HepG2 (cell line): ENCODE measurements at regions of chr2 and their contacts with region 1.

Region 1: DNA sequence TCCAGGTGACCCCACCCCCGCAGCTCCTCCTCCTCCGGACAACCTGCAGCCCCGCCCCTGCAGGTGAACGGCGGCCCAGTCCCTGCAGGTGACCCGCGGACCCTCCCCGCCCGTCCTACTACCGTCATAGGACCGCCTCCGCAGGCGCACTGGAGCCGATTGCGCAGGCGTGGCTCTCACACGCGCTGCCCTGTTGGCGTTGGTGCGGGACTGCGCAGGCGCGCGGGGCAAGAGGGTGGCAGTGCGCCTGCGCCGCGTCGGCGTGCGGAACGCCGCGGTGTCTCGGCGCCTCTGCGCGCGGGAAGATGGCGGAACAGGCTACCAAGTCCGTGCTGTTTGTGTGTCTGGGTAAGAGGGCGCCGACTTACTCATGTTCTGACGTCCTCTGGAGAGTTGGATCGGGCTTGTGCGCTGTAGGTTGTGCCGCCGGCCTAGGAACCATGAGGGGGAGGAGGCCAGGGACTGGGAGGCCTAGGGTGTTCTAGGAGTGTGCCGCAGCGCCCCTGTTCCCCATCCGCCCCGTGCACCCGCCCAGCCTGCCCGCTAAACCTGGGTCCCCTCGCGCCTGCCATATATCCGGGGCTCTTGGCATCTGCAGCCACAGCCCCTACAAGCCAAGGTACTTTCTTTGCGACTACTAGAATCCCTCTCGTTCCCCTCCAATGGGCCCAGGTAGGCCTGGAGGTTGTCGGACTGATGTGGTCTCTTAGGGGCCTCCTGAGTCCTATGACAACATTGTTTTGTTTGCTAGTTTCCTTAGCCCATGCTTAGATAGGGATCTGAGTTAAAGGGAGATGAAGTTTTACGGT is at the start of gene ACP1:
- DNase-seq: peak; percentile 93
- ATAC-seq: peak; percentile 76
- H3K4me3 ChIP-seq: peak within 1 kb of the TSS; percentile 95 to 99 (median 96)
- H3K27ac ChIP-seq: peak within 1 kb of the TSS; percentile 84
- H3K4me1 ChIP-seq: peaks cover 83% of the 10 kb centered on the region
- H3K27me3 ChIP-seq: peaks cover 0 to 5% of the 10 kb centered on the region in 2 experiments; a peak in 1 of 5 replicates
- CTCF ChIP-seq: 0 out of 2 replicates have a peak, but pooled peaks have one; percentile 44
- EP300 ChIP-seq: 0 out of 4 replicates have a peak, but pooled peaks of 1 of the 2 experiments have one; percentile 13
- POLR2A ChIP-seq: peak; percentile 97 to 98
- RAD21 ChIP-seq: peak; percentile 65
- total RNA-seq, gene ACP1: 246 and 290 TPM in 2 replicates

Region 2: DNA sequence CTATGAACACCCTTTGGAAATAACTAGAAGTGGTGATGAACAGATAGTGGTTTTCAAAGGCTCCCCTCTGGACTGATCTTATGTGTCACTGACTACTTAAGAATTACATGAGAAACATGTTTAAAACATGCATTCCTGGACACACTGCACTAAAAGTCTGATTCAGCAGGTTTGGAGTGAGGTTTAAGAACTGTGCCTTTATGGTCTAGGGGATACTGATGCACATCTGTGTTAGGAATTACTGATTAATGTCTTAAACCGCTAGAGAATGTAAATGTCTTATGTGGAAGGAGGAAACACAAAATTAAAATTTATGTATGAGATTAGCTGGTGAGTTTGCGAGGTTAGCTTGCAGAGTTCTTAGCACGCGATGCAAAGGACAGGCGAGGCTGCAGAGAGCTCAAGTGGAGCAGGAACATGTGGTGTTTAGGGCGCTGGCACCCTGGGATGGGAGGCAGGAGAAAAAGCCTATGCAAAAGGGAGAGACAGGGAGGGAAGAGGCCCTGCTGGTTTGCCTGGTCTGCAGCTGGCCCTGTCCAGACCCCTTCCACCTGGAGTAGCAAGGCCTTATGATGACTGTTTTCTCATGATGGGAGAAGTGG is 12.8 kb before region 1 on chr2:
- CTCF ChIA-PET with region 1: interaction called, 6 read pairs
- POLR2A ChIA-PET with region 1: interaction called, 32 read pairs
- in situ Hi-C with region 1: no loop called
- intact Hi-C with region 1: loop called (anchors 1 kb)
- DNase-seq: no peak
- ATAC-seq: no peak
- H3K4me3 ChIP-seq: no peak overlapping the region
- H3K27ac ChIP-seq: no peak overlapping the region
- H3K4me1 ChIP-seq: peaks cover 57% of the 10 kb centered on the region
- H3K27me3 ChIP-seq: no peaks in the 10 kb centered on the region
- CTCF ChIP-seq: no peak
- EP300 ChIP-seq: no peak
- POLR2A ChIP-seq: no peak
- RAD21 ChIP-seq: no peak